ENCODE measurements at regions of chr2 and their contacts with region 1.

Region 1: DNA sequence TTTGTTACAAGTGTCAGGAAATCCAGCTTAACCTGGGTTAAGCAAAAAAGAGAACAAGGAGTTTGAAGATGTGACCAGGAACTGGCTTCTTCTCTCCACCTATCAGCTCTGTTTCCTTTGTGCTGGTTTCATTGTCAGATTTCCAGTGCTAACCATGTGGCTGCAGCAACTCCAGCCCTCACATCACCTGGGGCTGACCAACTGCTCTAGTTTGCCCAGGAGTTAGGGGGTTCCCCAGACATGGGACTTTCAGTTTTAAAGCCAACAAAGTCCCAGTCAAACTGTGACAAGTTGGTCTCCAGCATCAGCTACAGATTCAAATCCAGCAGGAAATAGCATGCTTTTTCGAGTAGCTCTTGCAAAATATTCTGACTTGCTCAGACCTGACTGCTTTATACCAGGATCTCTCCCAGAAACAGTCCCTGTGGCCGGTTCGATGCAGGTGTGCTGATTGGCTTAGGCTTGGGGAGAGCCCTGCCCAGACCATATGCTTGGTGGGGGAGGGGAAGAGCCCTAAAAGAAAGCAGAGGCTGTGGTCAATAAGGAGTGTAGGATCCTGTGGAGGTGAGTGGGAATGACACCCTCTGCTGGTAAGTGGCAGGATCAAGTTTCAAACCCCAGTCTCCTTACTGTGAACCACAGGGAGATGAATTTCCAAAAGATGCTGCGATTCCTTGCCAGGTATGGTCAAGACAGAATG is 49.5 kb downstream of the KCNE4 start:
- DNase-seq: peak; percentile 52

Region 2: GRCh38 chr2:222919841-222920526 is 181.5 kb before region 1 on chr2:
- CTCF ChIA-PET with region 1: no interaction called
- POLR2A ChIA-PET with region 1: no interaction called
- DNase-seq: no peak

Region 3: GRCh38 chr2:222972420-222972819 is 129.1 kb before region 1 on chr2:
- CTCF ChIA-PET with region 1: interaction called, 11 read pairs
- POLR2A ChIA-PET with region 1: no interaction called
- DNase-seq: no peak

Region 4: DNA sequence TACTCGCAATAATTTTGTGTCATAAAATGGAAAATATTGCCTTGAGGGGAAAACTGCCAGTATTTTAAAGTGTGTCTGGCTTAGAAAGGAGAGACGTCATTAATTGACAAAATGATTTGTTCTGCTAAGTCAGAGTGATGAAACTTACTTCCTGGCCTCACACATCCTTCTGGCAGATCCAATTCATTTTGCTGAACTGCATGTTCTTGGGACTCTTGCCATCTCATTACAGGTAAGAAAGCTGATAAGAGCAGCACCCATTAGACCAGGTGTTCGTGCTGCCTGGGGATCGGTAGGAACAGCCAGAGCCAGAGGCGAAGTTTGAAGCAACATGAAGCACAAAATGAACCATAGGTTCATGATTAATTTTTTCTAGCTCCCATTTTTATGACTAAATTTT is 11.5 kb before region 1 on chr2:
- CTCF ChIA-PET with region 1: no interaction called
- POLR2A ChIA-PET with region 1: no interaction called
- DNase-seq: no peak

Region 5: DNA sequence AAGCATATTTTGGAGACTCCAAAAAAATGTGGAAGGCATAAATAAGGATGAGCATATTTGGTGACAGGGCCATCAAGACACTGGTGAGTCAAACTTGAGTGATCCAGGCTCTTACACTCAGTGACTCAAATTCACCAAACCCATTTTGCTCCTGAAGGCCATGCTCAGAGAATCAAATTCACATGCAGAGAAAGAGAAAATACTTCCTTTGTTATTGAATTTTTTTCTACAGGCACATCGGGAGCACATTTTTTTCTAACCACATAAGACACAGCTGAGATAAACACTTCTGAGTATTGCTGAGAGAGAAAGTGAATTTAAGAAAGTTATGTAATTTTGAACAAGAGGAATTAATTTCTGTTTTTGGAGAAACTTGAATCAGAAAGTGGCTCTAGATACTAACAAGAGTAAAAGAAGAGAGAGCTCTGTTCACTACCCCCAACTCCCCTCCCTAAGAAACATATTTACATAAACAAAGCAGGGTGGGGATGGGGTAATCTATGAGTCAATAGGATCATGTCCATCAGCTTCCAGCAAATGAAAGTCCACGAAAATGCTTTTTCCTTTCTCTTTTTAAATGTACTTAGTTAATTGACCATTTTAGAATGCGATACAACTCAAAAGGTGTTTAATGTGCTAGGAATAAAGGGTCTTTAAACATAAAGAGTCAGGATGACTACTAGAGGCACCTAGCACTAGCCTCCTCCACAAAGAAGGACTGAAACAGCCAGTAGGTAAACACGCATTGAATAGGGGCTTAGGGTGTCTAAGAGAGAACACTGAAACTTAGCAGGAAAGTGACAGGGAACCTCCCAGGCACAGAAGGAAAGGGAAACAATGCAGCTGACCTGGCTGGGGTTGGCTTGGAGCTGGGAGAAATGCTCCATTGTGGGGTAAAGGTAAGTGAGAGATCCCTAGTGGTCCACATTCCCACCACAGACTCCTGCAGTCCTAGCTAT is 102.8 kb after region 1 on chr2:
- CTCF ChIA-PET with region 1: no interaction called
- POLR2A ChIA-PET with region 1: no interaction called
- DNase-seq: no peak